ENCODE measurements at regions of chr12 and their contacts with region 1.

Region 1: DNA sequence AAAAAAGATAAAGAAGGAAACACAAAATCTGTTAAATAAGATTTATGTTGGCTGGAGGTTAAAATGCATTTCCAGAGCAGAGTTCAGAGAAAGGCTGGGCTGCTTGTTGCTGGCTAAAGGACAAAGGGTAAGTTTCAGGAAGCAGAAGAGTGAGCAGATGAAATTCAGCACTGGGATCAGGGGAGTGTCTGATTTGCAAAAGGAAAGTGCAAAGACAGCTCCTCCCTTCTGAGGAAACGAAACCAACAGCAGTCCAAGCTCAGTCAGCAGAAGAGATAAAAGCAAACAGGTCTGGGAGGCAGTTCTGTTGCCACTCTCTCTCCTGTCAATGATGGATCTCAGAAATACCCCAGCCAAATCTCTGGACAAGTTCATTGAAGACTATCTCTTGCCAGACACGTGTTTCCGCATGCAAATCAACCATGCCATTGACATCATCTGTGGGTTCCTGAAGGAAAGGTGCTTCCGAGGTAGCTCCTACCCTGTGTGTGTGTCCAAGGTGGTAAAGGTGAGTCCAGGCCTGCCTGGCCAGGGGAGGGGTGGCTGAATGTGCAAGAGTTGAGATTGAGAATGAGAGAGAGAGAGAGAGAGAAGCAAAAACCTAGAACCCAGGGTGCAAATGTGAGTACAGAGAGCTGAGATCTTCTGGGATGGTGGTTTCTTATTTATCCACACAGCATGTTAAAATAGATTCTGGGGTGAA is at the start of gene OAS1:
- DNase-seq: peak in 1 of 2 donors; percentile 50
- ATAC-seq: peak; percentile 65 to 93 (median 85)
- H3K4me3 ChIP-seq: peak within 1 kb of the TSS; percentile 18 to 68 (median 60)
- H3K27ac ChIP-seq: peak within 1 kb of the TSS in 9 of 10 donors; percentile 38 to 89 (median 64)
- H3K4me1 ChIP-seq: peaks cover 0 to 61% (median 22%) of the 10 kb centered on the region in 9 donors
- H3K27me3 ChIP-seq: no peaks in the 10 kb centered on the region
- CTCF ChIP-seq: no peak
- total RNA-seq, gene OAS1: 4.1 to 20.3 (median 7.2) TPM

Region 2: GRCh38 chr12:112868459-112869041 is 38.3 kb before region 1 on chr12:
- intact Hi-C with region 1: no loop called
- DNase-seq: no peak
- ATAC-seq: no peak
- H3K4me3 ChIP-seq: no peak overlapping the region
- H3K27ac ChIP-seq: no peak overlapping the region
- H3K4me1 ChIP-seq: peaks cover 0 to 7% (median 0%) of the 10 kb centered on the region in 9 donors
- H3K27me3 ChIP-seq: peaks cover 0 to 44% (median 40%) of the 10 kb centered on the region in 7 donors
- CTCF ChIP-seq: no peak

Region 3: GRCh38 chr12:112937741-112938719 is 31.2 kb after region 1 on chr12 and contains the start of gene OAS3:
- intact Hi-C with region 1: loop called in 1 of 10 experiments (anchors 1 kb)
- DNase-seq: peak; percentile 88 to 92
- ATAC-seq: peak; percentile 92 to 98 (median 96)
- H3K4me3 ChIP-seq: peak within 1 kb of the TSS; percentile 53 to 88 (median 66)
- H3K27ac ChIP-seq: peak within 1 kb of the TSS; percentile 67 to 92 (median 81)
- H3K4me1 ChIP-seq: peaks cover 4 to 27% (median 14%) of the 10 kb centered on the region in 9 donors
- H3K27me3 ChIP-seq: peaks cover 0 to 4% (median 0%) of the 10 kb centered on the region in 7 donors
- CTCF ChIP-seq: no peak
- total RNA-seq, gene OAS3: 5.9 to 28.0 (median 10.5) TPM

Region 4: GRCh38 chr12:112978163-112979040 is 71.5 kb after region 1 on chr12 and contains the start of gene OAS2:
- intact Hi-C with region 1: loop called in 1 of 10 experiments (anchors 10 kb)
- DNase-seq: peak; percentile 23 to 78
- ATAC-seq: peak; percentile 91 to 96 (median 95)
- H3K4me3 ChIP-seq: peak within 1 kb of the TSS; percentile 20 to 70 (median 62)
- H3K27ac ChIP-seq: peak within 1 kb of the TSS; percentile 68 to 94 (median 88)
- H3K4me1 ChIP-seq: peaks cover 0 to 39% (median 11%) of the 10 kb centered on the region in 9 donors
- H3K27me3 ChIP-seq: no peaks in the 10 kb centered on the region
- CTCF ChIP-seq: no peak
- total RNA-seq, gene OAS2: 5.3 to 24.2 (median 9.4) TPM

Measured in heart right ventricle (tissue), 16 donors.